Pancreas (tissue), 10 donors: ENCODE measurements at regions of chr16 and their contacts with region 1.

Region 1: GRCh38 chr16:57863434-57864160 is 61.3 kb upstream of the KIFC3 start:
- DNase-seq: peak; percentile 60 to 75 (median 70)
- ATAC-seq: peak; percentile 93 to 98 (median 97)
- H3K4me3 ChIP-seq: no peak overlapping the region
- H3K27ac ChIP-seq: peak overlapping the region in 2 of 4 donors; percentile 6 to 36
- H3K4me1 ChIP-seq: peaks cover 0 to 6% (median 0%) of the 10 kb centered on the region in 3 donors
- H3K27me3 ChIP-seq: no peaks in the 10 kb centered on the region
- CTCF ChIP-seq: peak in 3 of 4 donors; percentile 24 to 42 (median 32)

Region 2: GRCh38 chr16:57757326-57757786 is 106.2 kb before region 1 on chr16:
- intact Hi-C with region 1: loop called in 1 of 3 experiments (anchors 10 kb)
- DNase-seq: peak; percentile 77 to 99 (median 92)
- ATAC-seq: peak; percentile 88 to 95 (median 93)
- H3K4me3 ChIP-seq: no peak overlapping the region
- H3K27ac ChIP-seq: peak overlapping the region in 1 of 4 donors; percentile 28
- H3K4me1 ChIP-seq: no peaks in the 10 kb centered on the region
- H3K27me3 ChIP-seq: no peaks in the 10 kb centered on the region
- CTCF ChIP-seq: peak; percentile 95 to 100 (median 98)

Region 3: DNA sequence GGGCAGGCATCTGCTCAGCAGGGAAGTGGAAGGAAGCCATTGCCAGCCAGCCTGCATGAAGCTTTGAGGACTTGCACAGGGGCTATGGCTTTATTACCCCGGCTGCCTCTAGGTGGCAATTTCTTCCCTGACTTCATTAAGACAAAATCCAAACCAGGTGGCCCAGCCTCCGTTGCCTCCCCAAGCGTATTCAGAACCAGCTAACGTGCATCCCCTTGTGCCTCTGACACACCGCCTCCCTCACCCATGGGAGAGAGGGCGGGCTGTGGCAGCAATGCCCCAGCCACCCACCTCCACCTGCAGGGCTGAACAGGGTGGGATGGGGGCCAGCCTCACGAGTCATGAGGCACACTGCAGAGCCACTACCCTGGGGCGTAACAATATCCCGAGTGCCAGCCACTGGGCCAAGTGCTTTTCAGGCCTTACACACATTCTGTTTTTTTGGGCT is 68.1 kb before region 1 on chr16:
- intact Hi-C with region 1: loop called in 1 of 3 experiments (anchors 10 kb)
- DNase-seq: peak in 4 of 6 donors; percentile 66 to 79 (median 73)
- ATAC-seq: peak in 3 of 4 donors; percentile 7 to 31 (median 17)
- H3K4me3 ChIP-seq: peak overlapping the region in 2 of 4 donors; percentile 50 to 61
- H3K27ac ChIP-seq: peak overlapping the region in 2 of 4 donors; percentile 86 to 96
- H3K4me1 ChIP-seq: peaks cover 6 to 34% (median 19%) of the 10 kb centered on the region in 3 donors
- H3K27me3 ChIP-seq: no peaks in the 10 kb centered on the region
- CTCF ChIP-seq: peak; percentile 12 to 37 (median 32)

Region 4: GRCh38 chr16:58212824-58213655 is 349.4 kb after region 1 on chr16:
- intact Hi-C with region 1: no loop called
- DNase-seq: no peak
- ATAC-seq: no peak
- H3K4me3 ChIP-seq: no peak overlapping the region
- H3K27ac ChIP-seq: no peak overlapping the region
- H3K4me1 ChIP-seq: no peaks in the 10 kb centered on the region
- H3K27me3 ChIP-seq: no peaks in the 10 kb centered on the region
- CTCF ChIP-seq: no peak